Posterior cingulate gyrus (tissue), 11 donors: ENCODE measurements at regions of chr10 and their contacts with region 1.

Region 1: DNA sequence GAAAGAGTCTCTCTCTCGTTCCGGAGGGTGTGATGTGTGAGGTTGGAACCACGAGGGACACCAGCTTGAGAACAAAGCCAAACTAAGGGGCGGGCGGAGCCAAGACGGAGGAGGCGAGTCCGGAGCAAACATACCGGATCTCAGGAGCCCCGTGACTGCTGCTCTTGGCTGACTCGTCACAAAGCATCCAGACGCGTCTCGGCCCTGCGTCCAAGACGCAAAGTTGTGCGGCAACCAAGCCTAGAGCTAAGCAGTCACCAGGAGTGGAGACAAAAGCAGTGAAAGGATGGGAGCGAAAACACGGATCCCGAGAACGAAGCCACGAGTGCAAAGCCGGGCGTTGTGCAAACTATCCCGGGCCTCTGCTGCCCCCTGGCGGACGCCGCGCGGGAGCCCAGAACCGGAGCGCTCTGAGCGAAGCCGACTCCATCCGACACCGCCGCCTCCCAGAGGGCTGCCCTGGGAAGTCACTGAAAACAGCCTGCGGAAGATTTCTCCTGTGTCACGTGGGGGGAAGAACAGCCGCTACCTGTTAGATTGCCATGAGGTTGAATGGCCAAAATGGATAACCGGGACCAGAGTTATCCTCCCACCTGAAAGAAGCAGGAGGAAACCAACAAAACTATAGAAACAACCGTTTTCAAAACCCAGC is 46.4 kb upstream of the TMEM72 start:
- DNase-seq: peak; percentile 86 to 99 (median 94)

Region 2: DNA sequence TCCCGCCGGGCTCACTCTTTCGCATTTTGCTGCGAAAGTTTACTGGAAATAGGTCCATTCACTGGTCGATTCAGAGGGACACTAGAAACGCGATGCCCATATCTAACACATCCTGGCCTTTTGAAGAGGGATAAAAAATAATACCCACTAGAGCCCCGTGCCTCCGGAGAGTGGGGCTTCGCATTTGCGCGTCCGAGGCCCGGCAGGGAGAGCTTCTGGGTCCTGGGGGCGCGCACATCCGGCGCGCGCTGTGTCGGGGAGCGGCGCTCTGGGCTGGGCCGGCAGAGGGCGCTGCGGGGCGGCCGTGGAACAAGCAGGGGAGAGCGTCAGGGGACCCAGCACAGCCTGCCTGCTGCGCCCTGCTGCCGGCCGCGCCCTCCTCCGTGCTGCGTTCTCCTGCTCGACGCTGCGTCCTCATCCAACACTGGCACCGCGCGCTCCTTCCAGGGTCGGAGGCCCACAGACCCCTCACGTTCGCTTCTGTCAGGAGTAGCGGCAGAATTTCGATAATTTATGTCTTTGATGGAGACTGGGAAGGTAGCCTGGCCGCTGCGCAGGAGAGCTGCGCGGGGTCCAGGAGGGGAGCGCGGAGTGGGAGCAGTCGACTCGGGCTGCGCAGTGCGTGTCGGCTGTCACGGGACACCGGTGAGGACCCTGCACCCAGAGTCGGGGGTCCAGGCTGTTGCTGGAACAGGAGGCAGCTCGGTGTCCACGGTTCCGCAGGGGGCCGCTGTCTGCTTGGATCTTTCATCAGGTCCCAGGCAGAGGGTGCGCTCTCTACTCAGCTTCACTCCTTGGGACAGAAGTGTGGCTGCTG is 1174.6 kb before region 1 on chr10:
- intact Hi-C with region 1: loop called (anchors 2 kb)
- DNase-seq: peak; percentile 70 to 97 (median 82)